K562 (cell line): ENCODE measurements at regions of chr2 and their contacts with region 1.

Region 1: GRCh38 chr2:227862227-227862740 is 9.1 kb upstream of the DAW1 start:
- DNase-seq: peak; percentile 17 to 35 (median 34)
- ATAC-seq: 0 out of 3 replicates have a peak, but pooled peaks have one; percentile 47
- H3K4me3 ChIP-seq: no peak overlapping the region
- H3K27ac ChIP-seq: no peak overlapping the region
- H3K4me1 ChIP-seq: no peaks in the 10 kb centered on the region
- H3K27me3 ChIP-seq: no peaks in the 10 kb centered on the region
- CTCF ChIP-seq: peak; percentile 35 to 67 (median 35); a peak in 4 of 6 replicates
- EP300 ChIP-seq: no peak
- POLR2A ChIP-seq: no peak
- RAD21 ChIP-seq: peak; percentile 40 to 53

Region 2: GRCh38 chr2:227395556-227395955 is 466.7 kb before region 1 on chr2:
- CTCF ChIA-PET with region 1: no interaction called
- POLR2A ChIA-PET with region 1: no interaction called
- in situ Hi-C with region 1: no loop called
- intact Hi-C with region 1: loop called (anchors 10 kb)
- DNase-seq: no peak
- ATAC-seq: no peak
- H3K4me3 ChIP-seq: no peak overlapping the region
- H3K27ac ChIP-seq: no peak overlapping the region
- H3K4me1 ChIP-seq: no peaks in the 10 kb centered on the region; a peak in 2 of 5 replicates
- H3K27me3 ChIP-seq: peaks cover 0 to 4% of the 10 kb centered on the region in 2 experiments; a peak in 1 of 5 replicates
- CTCF ChIP-seq: no peak
- EP300 ChIP-seq: no peak
- POLR2A ChIP-seq: no peak
- RAD21 ChIP-seq: no peak

Region 3: DNA sequence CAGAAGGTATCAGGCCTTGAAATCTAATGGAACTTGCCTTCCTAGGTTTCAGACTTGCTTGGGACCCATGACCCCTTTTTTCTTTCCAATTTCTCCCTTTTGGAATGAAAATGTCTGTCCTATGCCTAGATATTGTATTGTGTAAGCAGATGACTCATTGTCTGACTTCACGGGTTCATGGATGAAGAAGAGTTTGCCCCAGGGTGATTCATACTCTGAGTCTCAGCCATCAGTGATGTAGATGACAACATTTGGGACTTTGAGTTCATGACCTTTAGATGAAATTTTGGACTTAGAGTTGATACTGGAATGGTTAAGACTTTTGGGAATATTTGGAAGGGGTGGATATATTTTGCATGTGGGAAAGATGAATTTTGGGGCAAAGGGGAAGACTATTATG is 206.8 kb before region 1 on chr2:
- CTCF ChIA-PET with region 1: interaction called, 4 read pairs
- POLR2A ChIA-PET with region 1: no interaction called
- in situ Hi-C with region 1: no loop called
- intact Hi-C with region 1: loop called (anchors 5 kb)
- DNase-seq: peak in 3 of 4 experiments; percentile 2 to 6 (median 5)
- ATAC-seq: no peak
- H3K4me3 ChIP-seq: no peak overlapping the region
- H3K27ac ChIP-seq: no peak overlapping the region
- H3K4me1 ChIP-seq: no peaks in the 10 kb centered on the region
- H3K27me3 ChIP-seq: no peaks in the 10 kb centered on the region
- CTCF ChIP-seq: no peak
- EP300 ChIP-seq: no peak
- POLR2A ChIP-seq: no peak
- RAD21 ChIP-seq: no peak

Region 4: DNA sequence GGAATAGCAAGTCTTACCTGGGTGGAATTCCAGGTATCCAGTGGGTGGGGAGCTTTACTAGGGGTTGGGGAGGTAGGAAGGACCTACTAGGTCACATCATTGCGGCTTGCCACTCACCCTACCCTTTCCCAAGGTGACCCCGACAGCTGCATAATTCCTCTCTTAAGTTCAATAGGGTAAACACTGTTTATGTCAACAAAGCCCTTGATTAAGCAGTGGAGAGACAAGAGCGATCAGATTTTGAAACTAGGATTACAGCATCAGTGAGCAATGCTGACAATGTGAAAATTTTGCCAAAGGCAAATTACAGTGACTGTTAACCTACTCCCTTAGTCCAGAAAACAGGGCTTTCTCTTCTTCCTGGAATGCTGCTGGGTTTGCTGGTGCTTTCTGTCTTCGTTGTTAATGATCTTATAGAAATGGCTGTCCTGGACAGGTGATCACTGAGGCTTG is 159.0 kb before region 1 on chr2:
- CTCF ChIA-PET with region 1: no interaction called
- POLR2A ChIA-PET with region 1: no interaction called
- in situ Hi-C with region 1: no loop called
- intact Hi-C with region 1: no loop called
- DNase-seq: no peak
- ATAC-seq: no peak
- H3K4me3 ChIP-seq: no peak overlapping the region
- H3K27ac ChIP-seq: no peak overlapping the region
- H3K4me1 ChIP-seq: no peaks in the 10 kb centered on the region
- H3K27me3 ChIP-seq: peaks cover 4 to 12% of the 10 kb centered on the region in 2 experiments; a peak in 3 of 5 replicates
- CTCF ChIP-seq: no peak
- EP300 ChIP-seq: no peak
- POLR2A ChIP-seq: no peak
- RAD21 ChIP-seq: no peak